Calu3 (cell line): ENCODE measurements at regions of chr12 and their contacts with region 1.

Region 1: DNA sequence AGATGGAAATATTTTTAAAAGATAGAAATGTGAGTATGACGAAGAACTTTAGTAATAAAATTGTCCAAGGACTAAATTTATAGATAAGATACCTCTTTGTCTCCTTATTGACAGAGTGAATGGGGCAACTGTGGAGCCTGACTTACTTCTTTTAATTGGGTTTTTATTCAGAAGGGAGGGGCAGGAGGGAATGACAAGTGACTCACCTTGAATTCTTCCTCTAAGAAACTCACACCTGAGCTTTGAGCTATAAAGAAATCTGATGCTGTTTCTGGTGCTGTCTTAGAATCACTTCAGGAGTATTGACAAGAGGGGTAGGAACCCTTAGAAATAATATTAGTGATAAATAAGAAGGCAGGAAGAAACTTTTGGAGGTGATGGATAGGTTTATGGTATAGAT is 951 bp downstream of the NR1H4 start:
- DNase-seq: no peak
- H3K4me3 Mint-ChIP-seq: no peak overlapping the region
- H3K27ac Mint-ChIP-seq: no peak overlapping the region
- H3K4me1 Mint-ChIP-seq: peaks cover 31% of the 10 kb centered on the region
- H3K27me3 Mint-ChIP-seq: no peaks in the 10 kb centered on the region
- CTCF ChIP-seq: no peak

Region 2: GRCh38 chr12:99386907-99387306 is 1087.7 kb before region 1 on chr12:
- CTCF ChIA-PET with region 1: no interaction called
- intact Hi-C with region 1: no loop called
- DNase-seq: peak; percentile 13
- H3K4me3 Mint-ChIP-seq: no peak overlapping the region
- H3K27ac Mint-ChIP-seq: no peak overlapping the region
- H3K4me1 Mint-ChIP-seq: peaks cover 2% of the 10 kb centered on the region
- H3K27me3 Mint-ChIP-seq: no peaks in the 10 kb centered on the region
- CTCF ChIP-seq: peak; percentile 29

Region 3: DNA sequence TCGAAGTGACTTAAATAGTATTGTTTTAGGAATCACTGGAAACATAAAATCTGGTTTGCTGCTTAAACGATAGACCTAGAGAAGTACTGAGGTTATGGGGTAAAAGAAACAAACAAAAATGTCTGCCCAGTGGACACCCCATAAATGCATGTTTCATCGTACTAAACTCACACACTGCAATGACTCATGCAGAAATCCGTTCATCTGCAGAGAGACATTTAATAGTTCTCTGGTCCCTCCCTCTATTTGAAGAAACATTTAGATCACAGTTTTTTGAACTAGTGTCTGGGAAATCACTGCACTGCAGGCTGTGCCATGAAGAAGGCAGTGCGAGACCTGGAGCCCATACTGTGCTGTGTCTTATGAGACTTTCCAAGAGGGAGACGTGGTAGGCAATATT is 92.3 kb before region 1 on chr12:
- CTCF ChIA-PET with region 1: no interaction called
- intact Hi-C with region 1: no loop called
- DNase-seq: no peak
- H3K4me3 Mint-ChIP-seq: no peak overlapping the region
- H3K27ac Mint-ChIP-seq: no peak overlapping the region
- H3K4me1 Mint-ChIP-seq: no peaks in the 10 kb centered on the region
- H3K27me3 Mint-ChIP-seq: no peaks in the 10 kb centered on the region
- CTCF ChIP-seq: no peak

Region 4: DNA sequence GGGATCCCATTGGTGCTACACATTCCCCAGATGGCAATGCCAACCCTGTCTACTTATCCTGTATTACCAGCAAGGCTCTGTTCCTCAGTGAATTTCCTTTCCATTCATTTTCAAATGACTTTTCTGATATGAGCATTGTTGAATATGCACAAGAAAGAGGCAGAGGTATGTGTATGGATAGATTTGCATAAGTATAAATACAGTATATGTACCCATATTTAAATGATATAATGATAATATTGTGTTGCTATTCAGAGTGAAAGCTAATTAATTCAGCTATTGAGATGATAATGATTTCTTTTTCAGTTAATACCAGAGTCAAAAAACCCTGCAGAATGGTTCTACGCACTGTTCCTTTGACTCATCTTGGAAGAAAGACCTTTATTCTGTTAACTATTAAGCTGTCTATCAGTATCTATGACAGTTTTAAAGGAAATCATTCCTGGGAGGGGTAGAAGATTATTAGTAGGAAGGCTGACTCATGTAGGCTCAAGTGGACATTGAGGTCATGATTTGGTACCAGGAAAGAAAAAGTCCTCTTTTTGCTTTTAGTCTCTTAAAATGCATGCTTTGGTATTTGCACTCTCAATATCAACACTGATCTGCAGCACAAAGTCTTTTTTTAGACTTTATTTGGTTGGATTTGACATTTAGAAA is 54.0 kb after region 1 on chr12:
- CTCF ChIA-PET with region 1: no interaction called
- intact Hi-C with region 1: loop called (anchors 5 kb)
- DNase-seq: no peak
- H3K4me3 Mint-ChIP-seq: no peak overlapping the region
- H3K27ac Mint-ChIP-seq: peak overlapping the region; percentile 75
- H3K4me1 Mint-ChIP-seq: peaks cover 39% of the 10 kb centered on the region
- H3K27me3 Mint-ChIP-seq: no peaks in the 10 kb centered on the region
- CTCF ChIP-seq: no peak